A673 (cell line): ENCODE measurements at regions of chr15 and their contacts with region 1.

Region 1: GRCh38 chr15:45705510-45706473 is 71.0 kb downstream of the SQOR start:
- DNase-seq: peak; percentile 91
- H3K4me3 ChIP-seq: peak overlapping the region; percentile 48
- H3K27ac ChIP-seq: no peak overlapping the region
- H3K4me1 ChIP-seq: no peaks in the 10 kb centered on the region
- H3K27me3 ChIP-seq: no peaks in the 10 kb centered on the region
- CTCF ChIP-seq: peak; percentile 87

Region 2: DNA sequence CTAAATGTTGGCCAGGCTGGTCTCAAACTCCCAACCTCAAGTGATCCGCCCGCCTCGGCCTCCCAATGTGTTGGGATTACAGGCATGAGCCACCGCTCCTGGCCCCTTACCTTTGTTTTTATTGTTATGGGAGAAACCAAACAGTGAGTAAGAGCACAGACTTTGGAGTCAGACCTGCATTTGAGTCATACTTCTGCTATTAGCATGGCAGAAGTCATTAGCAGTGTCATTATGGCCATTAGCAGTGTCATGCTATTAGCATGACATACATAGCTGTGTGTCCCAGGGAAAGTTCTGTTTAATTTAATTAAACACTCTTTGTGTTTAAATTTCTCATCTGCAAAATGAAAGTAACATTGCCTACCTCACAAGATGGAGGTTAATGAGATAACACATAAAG is 16.2 kb before region 1 on chr15:
- CTCF ChIA-PET with region 1: no interaction called
- POLR2A ChIA-PET with region 1: no interaction called
- intact Hi-C with region 1: no loop called
- DNase-seq: no peak
- H3K4me3 ChIP-seq: no peak overlapping the region
- H3K27ac ChIP-seq: no peak overlapping the region
- H3K4me1 ChIP-seq: no peaks in the 10 kb centered on the region
- H3K27me3 ChIP-seq: no peaks in the 10 kb centered on the region
- CTCF ChIP-seq: no peak

Region 3: GRCh38 chr15:45871121-45871985 is 165.6 kb after region 1 on chr15:
- CTCF ChIA-PET with region 1: no interaction called
- POLR2A ChIA-PET with region 1: no interaction called
- intact Hi-C with region 1: no loop called
- DNase-seq: no peak
- H3K4me3 ChIP-seq: no peak overlapping the region
- H3K27ac ChIP-seq: no peak overlapping the region
- H3K4me1 ChIP-seq: no peaks in the 10 kb centered on the region
- H3K27me3 ChIP-seq: no peaks in the 10 kb centered on the region
- CTCF ChIP-seq: no peak

Region 4: DNA sequence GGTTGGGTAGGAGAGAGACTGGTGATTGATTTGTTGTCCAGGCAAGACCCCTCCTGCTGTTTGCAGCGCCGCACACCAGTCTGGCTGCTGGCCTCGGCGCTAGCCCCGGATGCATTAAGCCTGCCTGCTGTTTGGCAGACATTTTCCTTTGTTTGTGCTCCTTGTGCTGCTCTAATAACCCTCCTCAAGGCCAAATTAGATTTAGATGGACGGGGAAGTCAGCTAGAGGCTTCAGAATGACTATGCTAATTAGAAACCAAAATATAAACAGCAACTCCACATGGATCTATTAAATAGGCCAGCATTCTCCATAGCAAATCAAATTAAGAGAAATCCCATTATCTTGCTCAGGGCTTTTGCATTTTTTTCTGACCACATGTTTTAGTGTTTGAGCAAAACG is 374.2 kb after region 1 on chr15:
- CTCF ChIA-PET with region 1: no interaction called
- POLR2A ChIA-PET with region 1: no interaction called
- intact Hi-C with region 1: loop called (anchors 10 kb)
- DNase-seq: peak; percentile 90
- H3K4me3 ChIP-seq: no peak overlapping the region
- H3K27ac ChIP-seq: peak overlapping the region; percentile 18
- H3K4me1 ChIP-seq: peaks cover 31% of the 10 kb centered on the region
- H3K27me3 ChIP-seq: no peaks in the 10 kb centered on the region
- CTCF ChIP-seq: no peak

Region 5: DNA sequence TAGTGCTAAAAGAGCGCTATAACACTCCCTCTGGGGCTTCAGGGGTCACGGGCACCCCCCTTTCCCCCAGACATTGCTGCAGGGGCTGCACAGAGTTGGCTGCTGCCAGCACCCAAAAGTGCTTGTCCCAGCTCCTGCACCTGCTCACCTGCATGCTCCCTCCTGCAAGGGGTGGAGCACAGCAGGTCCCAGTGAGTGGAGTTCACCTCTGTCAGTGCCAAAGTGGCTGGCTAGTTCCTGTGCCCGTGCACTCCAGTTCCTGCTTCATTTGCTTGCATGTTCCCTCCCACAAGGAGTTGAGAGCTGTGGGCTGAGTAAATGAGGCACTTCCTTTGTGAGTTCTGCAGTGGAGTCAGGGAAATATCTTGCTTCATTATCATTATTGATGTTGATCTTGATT is 405.9 kb after region 1 on chr15:
- CTCF ChIA-PET with region 1: no interaction called
- POLR2A ChIA-PET with region 1: no interaction called
- intact Hi-C with region 1: no loop called
- DNase-seq: no peak
- H3K4me3 ChIP-seq: no peak overlapping the region
- H3K27ac ChIP-seq: no peak overlapping the region
- H3K4me1 ChIP-seq: no peaks in the 10 kb centered on the region
- H3K27me3 ChIP-seq: no peaks in the 10 kb centered on the region
- CTCF ChIP-seq: no peak

Region 6: GRCh38 chr15:46304320-46304719 is 598.5 kb after region 1 on chr15:
- CTCF ChIA-PET with region 1: no interaction called
- POLR2A ChIA-PET with region 1: no interaction called
- intact Hi-C with region 1: loop called (anchors 5 kb)
- DNase-seq: peak; percentile 55
- H3K4me3 ChIP-seq: no peak overlapping the region
- H3K27ac ChIP-seq: no peak overlapping the region
- H3K4me1 ChIP-seq: no peaks in the 10 kb centered on the region
- H3K27me3 ChIP-seq: no peaks in the 10 kb centered on the region
- CTCF ChIP-seq: peak; percentile 89